Panc1 (cell line): ENCODE measurements at regions of chr2 and their contacts with region 1.

Region 1: GRCh38 chr2:175414882-175415487 is 233.5 kb upstream of the ATP5MC3 start:
- DNase-seq: peak; percentile 61
- ATAC-seq: peak; percentile 94
- H3K4me3 ChIP-seq: no peak overlapping the region
- H3K27ac ChIP-seq: no peak overlapping the region
- H3K4me1 ChIP-seq: no peaks in the 10 kb centered on the region
- H3K27me3 ChIP-seq: no peaks in the 10 kb centered on the region; the same call in 1 of the 2 replicates
- CTCF ChIP-seq: peak; percentile 82

Region 2: GRCh38 chr2:175326801-175327200 is 88.2 kb before region 1 on chr2:
- CTCF ChIA-PET with region 1: no interaction called
- POLR2A ChIA-PET with region 1: no interaction called
- in situ Hi-C with region 1: no loop called
- intact Hi-C with region 1: no loop called
- DNase-seq: no peak
- ATAC-seq: no peak
- H3K4me3 ChIP-seq: no peak overlapping the region
- H3K27ac ChIP-seq: no peak overlapping the region
- H3K4me1 ChIP-seq: no peaks in the 10 kb centered on the region
- H3K27me3 ChIP-seq: no peaks in the 10 kb centered on the region
- CTCF ChIP-seq: no peak

Region 3: DNA sequence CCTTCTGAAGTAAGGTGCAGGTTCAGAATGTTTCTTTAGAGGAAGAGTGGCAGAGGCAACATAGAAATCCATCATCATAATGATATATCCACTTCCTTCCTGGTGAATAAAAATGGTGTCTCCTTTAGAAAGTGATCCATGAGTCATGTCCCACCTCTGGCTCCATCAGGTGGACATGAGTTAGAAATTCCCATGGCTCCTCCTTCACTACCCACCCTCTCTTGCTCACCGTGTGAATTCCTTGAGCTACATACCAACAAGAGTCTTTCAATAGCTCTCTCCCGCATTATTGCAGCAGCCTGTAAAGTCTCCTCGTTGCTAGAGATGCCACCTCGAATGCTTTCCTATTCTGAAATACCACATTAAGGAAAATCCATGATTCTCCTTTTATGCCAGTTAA is 269.5 kb after region 1 on chr2:
- CTCF ChIA-PET with region 1: no interaction called
- POLR2A ChIA-PET with region 1: no interaction called
- in situ Hi-C with region 1: no loop called
- intact Hi-C with region 1: loop called (anchors 10 kb)
- DNase-seq: no peak
- ATAC-seq: no peak
- H3K4me3 ChIP-seq: no peak overlapping the region
- H3K27ac ChIP-seq: no peak overlapping the region
- H3K4me1 ChIP-seq: no peaks in the 10 kb centered on the region
- H3K27me3 ChIP-seq: peaks cover 6% of the 10 kb centered on the region; the same call in 1 of the 2 replicates
- CTCF ChIP-seq: no peak